T-cell (primary cell): ENCODE measurements at regions of chr2 and their contacts with region 1.

Region 1: GRCh38 chr2:168941297-168941696 is 40.2 kb downstream of the G6PC2 start:
- DNase-seq: no peak
- ATAC-seq: no peak
- H3K4me3 ChIP-seq: no peak overlapping the region
- H3K4me3 Mint-ChIP-seq: no peak overlapping the region
- H3K27ac ChIP-seq: no peak overlapping the region
- H3K27ac Mint-ChIP-seq: no peak overlapping the region
- H3K4me1 ChIP-seq: no peaks in the 10 kb centered on the region
- H3K4me1 Mint-ChIP-seq: no peaks in the 10 kb centered on the region
- H3K27me3 ChIP-seq: no peaks in the 10 kb centered on the region
- H3K27me3 Mint-ChIP-seq: peaks cover 4 to 7% of the 10 kb centered on the region in 2 donors

Region 2: DNA sequence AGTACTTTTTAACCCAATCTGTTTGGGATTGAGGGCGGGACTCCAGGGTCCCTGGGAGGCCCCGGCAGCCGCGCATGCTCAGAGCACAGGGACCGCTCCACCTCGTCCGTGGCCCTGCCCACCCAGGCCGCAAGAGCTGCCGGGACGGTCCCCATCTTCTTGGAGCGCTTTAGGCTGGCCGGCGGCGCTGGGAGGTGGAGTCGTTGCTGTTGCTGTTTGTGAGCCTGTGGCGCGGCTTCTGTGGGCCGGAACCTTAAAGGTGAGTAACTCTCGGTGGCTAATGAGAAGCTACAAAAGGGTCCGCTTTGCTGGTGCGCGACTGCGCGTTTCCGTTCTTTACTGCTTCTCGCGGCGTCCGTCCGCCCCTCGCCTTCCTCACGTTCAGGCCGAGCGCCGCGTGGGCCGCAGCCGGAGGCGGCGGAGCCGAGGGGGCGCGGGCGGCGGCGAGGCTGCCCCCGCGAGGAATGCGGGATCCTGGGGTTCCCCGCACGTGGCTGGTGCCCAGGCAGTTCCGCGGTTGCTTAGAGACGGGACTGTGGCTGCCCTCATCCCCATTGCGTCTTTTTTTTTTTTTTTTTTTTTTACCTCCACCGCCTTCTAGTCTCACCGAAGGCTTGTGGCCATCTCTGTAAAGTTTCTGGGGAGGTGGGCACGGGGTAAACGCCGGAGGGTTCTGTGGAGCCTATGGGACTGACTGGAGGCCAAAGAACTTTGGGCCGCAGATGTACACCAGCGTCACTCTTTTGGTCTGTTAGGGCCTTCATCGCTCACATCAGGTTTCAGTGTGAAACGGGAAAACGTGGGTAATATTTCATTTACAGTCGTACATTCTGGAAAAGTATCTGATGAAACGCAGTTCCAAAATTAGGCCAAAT is 857.7 kb after region 1 on chr2 and contains the start of gene SSB:
- CTCF ChIA-PET with region 1: no interaction called
- POLR2A ChIA-PET with region 1: interaction called in 1 of 2 experiments, 13 read pairs
- DNase-seq: peak; percentile 81 to 95 (median 87)
- ATAC-seq: peak; percentile 93 to 98 (median 97)
- H3K4me3 ChIP-seq: peak within 1 kb of the TSS; percentile 61 to 71
- H3K4me3 Mint-ChIP-seq: peak within 1 kb of the TSS; percentile 83 to 86 (median 84)
- H3K27ac ChIP-seq: peak within 1 kb of the TSS; percentile 87
- H3K27ac Mint-ChIP-seq: peak within 1 kb of the TSS; percentile 85 to 91
- H3K4me1 ChIP-seq: peaks cover 8 to 21% of the 10 kb centered on the region in 2 experiments
- H3K4me1 Mint-ChIP-seq: peaks cover 37 to 38% (median 38%) of the 10 kb centered on the region in 3 donors
- H3K27me3 ChIP-seq: no peaks in the 10 kb centered on the region
- H3K27me3 Mint-ChIP-seq: no peaks in the 10 kb centered on the region
- total RNA-seq, gene SSB: 84.3 to 118 (median 91.0) TPM